Ascending aorta (tissue), 2 donors: ENCODE measurements at regions of chr3 and their contacts with region 1.

Region 1: DNA sequence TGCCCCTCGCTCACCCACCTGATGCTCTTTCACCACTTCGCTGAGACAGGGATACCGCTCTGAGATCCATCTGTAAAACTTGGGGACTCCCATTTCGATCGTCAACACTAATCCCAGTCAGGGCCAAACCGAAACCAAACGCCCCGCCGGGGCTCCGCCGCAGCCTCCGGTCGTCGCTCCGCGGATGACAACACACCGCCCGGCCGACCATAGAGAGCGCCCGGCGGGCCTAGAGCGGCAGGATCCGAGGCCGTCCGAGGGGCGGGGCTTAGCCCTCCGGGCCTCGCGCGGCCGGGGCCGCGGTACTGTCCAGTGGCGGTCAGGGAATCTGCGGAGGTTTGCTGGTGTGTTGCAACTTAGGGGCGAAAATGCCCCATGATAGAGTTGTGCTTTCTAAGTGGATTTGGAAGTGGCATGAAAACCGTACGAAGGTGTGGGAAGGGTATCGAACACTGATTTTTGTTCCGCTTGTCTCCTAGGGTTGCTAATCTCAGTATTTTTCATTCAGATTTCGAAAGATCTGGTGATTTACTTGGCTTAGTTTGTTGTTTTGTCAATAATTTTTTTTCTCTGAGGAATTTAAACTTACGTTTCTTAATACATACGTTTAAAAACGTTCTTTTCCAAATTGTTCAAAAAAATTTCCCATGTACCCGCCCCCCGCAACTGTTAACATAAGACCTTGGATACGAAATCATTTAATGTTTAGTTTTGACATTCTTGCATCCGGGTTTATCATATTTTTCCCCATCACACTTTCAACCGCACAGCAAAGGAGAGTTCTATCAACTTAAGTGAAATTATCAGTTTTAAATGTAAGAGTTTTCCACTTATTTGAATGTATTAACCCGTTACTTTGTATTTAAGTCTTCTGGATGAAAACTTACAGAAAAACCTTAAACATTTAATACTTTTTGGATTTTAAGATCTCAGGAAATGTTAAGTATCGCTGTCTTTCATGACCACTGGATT is at the start of gene XRN1:
- DNase-seq: peak; percentile 83 to 98
- H3K4me3 ChIP-seq: peak within 1 kb of the TSS; percentile 88 to 90
- H3K27ac ChIP-seq: peak within 1 kb of the TSS; percentile 98
- H3K4me1 ChIP-seq: peaks cover 0 to 6% of the 10 kb centered on the region in 2 donors
- H3K27me3 ChIP-seq: no peaks in the 10 kb centered on the region
- CTCF ChIP-seq: no peak
- total RNA-seq, gene XRN1: 10.1 TPM

Region 2: GRCh38 chr3:140941434-140942220 is 1506.5 kb before region 1 on chr3 and contains the start of gene SLC25A36:
- intact Hi-C with region 1: loop called (anchors 5 kb)
- DNase-seq: peak; percentile 92 to 98
- H3K4me3 ChIP-seq: peak within 1 kb of the TSS; percentile 73 to 99
- H3K27ac ChIP-seq: peak within 1 kb of the TSS; percentile 99
- H3K4me1 ChIP-seq: peaks cover 0 to 15% of the 10 kb centered on the region in 2 donors
- H3K27me3 ChIP-seq: no peaks in the 10 kb centered on the region
- CTCF ChIP-seq: peak in 1 of 3 experiments; percentile 4
- total RNA-seq, gene SLC25A36: 19.1 TPM

Region 3: GRCh38 chr3:142165194-142165593 is 282.9 kb before region 1 on chr3:
- intact Hi-C with region 1: no loop called
- DNase-seq: no peak
- H3K4me3 ChIP-seq: no peak overlapping the region
- H3K27ac ChIP-seq: no peak overlapping the region
- H3K4me1 ChIP-seq: no peaks in the 10 kb centered on the region
- H3K27me3 ChIP-seq: no peaks in the 10 kb centered on the region
- CTCF ChIP-seq: no peak

Region 4: DNA sequence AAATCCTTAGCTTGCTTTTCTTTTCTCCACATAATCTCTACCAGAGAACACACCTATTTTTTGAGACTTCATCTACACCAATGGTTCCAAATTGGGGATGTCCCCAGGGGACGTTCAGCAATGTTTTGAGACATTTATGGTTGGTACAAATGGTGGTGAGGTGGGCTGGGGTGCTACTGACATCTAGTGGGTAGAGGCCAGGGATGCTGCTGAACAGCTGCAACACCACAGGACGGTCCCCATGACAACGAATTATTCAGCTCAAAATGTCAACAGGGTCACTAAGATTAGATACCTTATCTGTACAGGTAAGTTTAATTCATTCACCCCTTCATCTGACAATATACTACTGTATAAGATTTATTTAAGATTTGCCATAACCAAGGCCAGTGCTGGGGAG is 237.1 kb before region 1 on chr3:
- intact Hi-C with region 1: loop called (anchors 5 kb)
- DNase-seq: no peak
- H3K4me3 ChIP-seq: no peak overlapping the region
- H3K27ac ChIP-seq: peak overlapping the region; percentile 71 to 72
- H3K4me1 ChIP-seq: peaks cover 0 to 45% of the 10 kb centered on the region in 2 donors
- H3K27me3 ChIP-seq: no peaks in the 10 kb centered on the region
- CTCF ChIP-seq: no peak

Region 5: DNA sequence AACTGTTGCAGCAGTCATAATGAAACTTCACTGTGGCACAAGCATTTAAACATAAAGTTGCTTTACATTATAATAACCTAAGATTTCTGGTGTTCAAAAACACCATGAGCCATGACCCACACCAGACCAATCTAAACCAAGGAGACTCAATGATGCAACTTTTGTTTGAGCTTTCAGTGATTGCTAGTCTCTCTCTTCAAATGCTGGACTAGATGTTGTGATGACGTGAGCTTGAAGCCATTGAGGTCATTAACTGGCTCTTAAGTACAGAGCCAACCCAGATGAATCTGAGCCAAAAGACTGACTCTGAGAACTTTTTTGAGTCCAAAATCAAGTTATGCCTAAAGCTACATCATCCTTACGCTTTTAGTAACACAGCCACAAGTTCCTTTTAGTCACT is 93.9 kb after region 1 on chr3:
- intact Hi-C with region 1: no loop called
- DNase-seq: no peak
- H3K4me3 ChIP-seq: no peak overlapping the region
- H3K27ac ChIP-seq: no peak overlapping the region
- H3K4me1 ChIP-seq: no peaks in the 10 kb centered on the region
- H3K27me3 ChIP-seq: no peaks in the 10 kb centered on the region
- CTCF ChIP-seq: no peak

Region 6: GRCh38 chr3:142723968-142724681 is 276.0 kb after region 1 on chr3 and contains the start of gene TRPC1:
- intact Hi-C with region 1: loop called (anchors 10 kb)
- DNase-seq: peak; percentile 22 to 80
- H3K4me3 ChIP-seq: peak within 1 kb of the TSS; percentile 77 to 91
- H3K27ac ChIP-seq: peak within 1 kb of the TSS; percentile 78 to 87
- H3K4me1 ChIP-seq: no peaks in the 10 kb centered on the region
- H3K27me3 ChIP-seq: no peaks in the 10 kb centered on the region
- CTCF ChIP-seq: no peak
- total RNA-seq, gene TRPC1: 12.3 TPM

Region 7: GRCh38 chr3:143972505-143973255 is 1524.5 kb after region 1 on chr3:
- intact Hi-C with region 1: loop called (anchors 10 kb)
- DNase-seq: peak; percentile 39 to 88
- H3K4me3 ChIP-seq: peak overlapping the region; percentile 79 to 94
- H3K27ac ChIP-seq: peak overlapping the region; percentile 97 to 98
- H3K4me1 ChIP-seq: peaks cover 0 to 3% of the 10 kb centered on the region in 2 donors
- H3K27me3 ChIP-seq: no peaks in the 10 kb centered on the region
- CTCF ChIP-seq: peak; percentile 32 to 53 (median 36)